HEK293T (cell line): ENCODE measurements at regions of chr6 and their contacts with region 1.

Region 1: GRCh38 chr6:56595490-56596122 is 47.1 kb downstream of the DST start:
- DNase-seq: peak; percentile 26

Region 2: DNA sequence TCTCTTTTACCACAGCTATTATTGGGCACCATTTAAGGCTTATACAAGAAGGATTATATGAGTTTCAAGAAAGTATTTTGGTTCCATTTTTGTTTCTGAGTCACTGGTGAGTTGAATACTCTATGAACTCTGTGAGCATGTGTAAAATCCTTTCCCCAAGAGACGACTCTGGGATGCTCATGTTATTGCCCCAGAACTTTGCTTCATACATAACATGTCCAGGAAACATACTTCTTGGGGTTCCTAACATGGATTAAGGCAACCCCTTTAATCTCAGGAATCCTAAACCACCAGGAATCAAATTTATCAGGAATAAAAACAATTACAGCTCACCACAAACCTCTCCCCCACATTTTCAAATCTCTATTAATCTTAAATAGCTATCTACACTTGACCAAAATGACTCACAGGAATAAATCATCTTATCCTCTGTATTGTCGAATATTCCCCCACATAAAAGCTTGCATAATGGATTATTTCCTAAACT is 230.7 kb before region 1 on chr6:
- CTCF ChIA-PET with region 1: interaction called, 36 read pairs
- POLR2A ChIA-PET with region 1: no interaction called
- DNase-seq: no peak

Region 3: GRCh38 chr6:56370561-56371211 is 224.9 kb before region 1 on chr6:
- CTCF ChIA-PET with region 1: interaction called, 36 read pairs
- POLR2A ChIA-PET with region 1: no interaction called
- DNase-seq: no peak

Region 4: GRCh38 chr6:56517155-56517745 is 78.4 kb before region 1 on chr6:
- CTCF ChIA-PET with region 1: no interaction called
- POLR2A ChIA-PET with region 1: no interaction called
- DNase-seq: no peak

Region 5: DNA sequence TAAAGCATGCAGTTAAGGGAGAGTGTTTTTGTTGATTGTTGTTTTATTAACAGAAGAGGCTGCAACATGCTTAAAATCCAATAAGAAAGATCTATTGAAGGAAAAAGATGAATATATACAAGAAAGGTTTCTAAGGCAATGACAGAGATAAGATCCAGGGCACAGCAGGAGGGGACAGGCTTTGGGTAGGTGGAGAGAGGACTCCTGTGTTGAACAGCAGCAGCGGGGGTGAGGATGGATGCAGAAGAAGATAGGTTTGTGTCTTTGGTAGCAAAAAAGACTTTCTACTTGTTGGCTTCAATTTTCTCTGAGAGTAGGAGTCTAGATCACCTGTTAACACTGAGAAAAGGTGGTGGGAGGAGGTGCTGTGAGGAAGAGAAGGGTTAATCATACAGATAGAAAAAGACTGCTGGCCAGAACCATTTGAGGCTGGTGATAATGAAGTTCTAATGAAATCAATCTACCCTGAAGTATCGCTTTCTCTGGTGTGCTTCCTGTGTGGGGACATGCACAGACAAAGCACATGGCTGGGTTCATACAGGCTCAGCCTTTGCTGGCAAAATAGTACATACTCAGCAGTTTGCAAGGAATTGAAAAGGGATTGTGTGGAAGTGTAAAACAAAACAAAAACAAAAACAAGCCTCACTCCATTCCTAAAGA is 64.2 kb after region 1 on chr6:
- CTCF ChIA-PET with region 1: no interaction called
- POLR2A ChIA-PET with region 1: no interaction called
- DNase-seq: no peak